ENCODE measurements at regions of chr7 and their contacts with region 1.

Region 1: GRCh38 chr7:2757904-2758672 is 70.1 kb downstream of the AMZ1 start:
- DNase-seq: peak; percentile 69
- CTCF ChIP-seq: no peak

Region 2: GRCh38 chr7:2621061-2621828 is 136.8 kb before region 1 on chr7:
- CTCF ChIA-PET with region 1: no interaction called
- POLR2A ChIA-PET with region 1: no interaction called
- DNase-seq: no peak
- CTCF ChIP-seq: no peak

Region 3: GRCh38 chr7:2771274-2771731 is 13.2 kb after region 1 on chr7:
- CTCF ChIA-PET with region 1: interaction called, 27 read pairs
- POLR2A ChIA-PET with region 1: no interaction called
- DNase-seq: no peak
- CTCF ChIP-seq: no peak

Region 4: GRCh38 chr7:2779086-2779485 is 21.0 kb after region 1 on chr7:
- CTCF ChIA-PET with region 1: interaction called, 10 read pairs
- POLR2A ChIA-PET with region 1: no interaction called
- DNase-seq: no peak
- CTCF ChIP-seq: no peak

Measured in GM10248 (cell line).